HCT116 (cell line): ENCODE measurements at regions of chr4 and their contacts with region 1.

Region 1: DNA sequence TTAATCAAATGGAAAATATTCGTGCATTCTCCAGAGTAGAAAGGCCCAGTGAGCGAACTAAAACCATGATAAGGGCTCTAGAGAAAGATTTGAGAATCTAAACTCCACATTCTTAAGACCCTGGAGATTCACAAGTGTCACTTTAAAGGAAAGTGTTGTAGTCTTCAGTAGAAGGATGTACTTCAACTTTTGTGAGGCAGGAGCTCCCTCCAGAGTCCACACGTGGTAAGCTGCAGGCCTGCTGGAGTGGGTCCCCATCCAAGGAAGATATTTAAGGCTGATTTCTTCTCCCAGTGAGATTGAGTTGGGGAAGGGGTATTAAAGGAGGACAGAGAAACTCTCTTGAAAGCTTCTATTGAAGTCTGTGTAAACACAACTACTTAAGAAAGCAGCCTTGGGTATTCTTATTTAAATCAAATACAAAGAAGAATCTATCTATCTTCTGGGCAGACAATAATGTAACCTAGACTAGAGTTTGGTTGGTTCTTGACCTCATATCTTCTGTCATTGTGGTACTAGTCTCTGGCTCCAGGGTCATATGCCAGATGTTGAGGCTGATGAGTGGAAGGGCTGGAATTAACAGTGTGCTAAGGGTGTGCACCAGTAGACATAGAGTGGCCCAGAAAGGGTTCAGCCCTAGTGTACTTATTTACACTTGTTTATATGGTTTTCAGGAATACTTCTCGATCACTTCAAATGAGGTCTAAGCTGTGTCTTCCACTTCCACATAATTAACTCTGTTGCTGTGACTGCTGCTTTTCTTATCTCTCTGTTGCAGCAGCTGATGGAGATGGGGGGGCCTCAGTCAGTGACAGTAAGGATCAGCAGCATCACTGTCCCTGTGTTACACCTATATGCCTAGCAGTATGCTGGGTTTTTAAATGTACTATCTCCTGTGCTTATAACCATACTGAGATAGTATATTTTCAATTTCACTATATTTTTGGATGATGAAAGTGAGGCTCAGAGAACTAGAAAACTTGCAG is 76.1 kb downstream of the HMGB2 start:
- DNase-seq: peak; percentile 63
- ATAC-seq: peak; percentile 92
- H3K4me3 ChIP-seq: no peak overlapping the region
- H3K27ac ChIP-seq: no peak overlapping the region
- H3K4me1 ChIP-seq: peaks cover 6 to 9% of the 10 kb centered on the region in 2 experiments
- H3K27me3 ChIP-seq: no peaks in the 10 kb centered on the region
- CTCF ChIP-seq: peak; percentile 80 to 97 (median 87)
- POLR2A ChIP-seq: no peak
- RAD21 ChIP-seq: peak; percentile 94

Region 2: GRCh38 chr4:172842779-172843178 is 415.2 kb before region 1 on chr4:
- CTCF ChIA-PET with region 1: no interaction called
- POLR2A ChIA-PET with region 1: no interaction called
- RAD21 ChIA-PET with region 1: no interaction called
- intact Hi-C with region 1: no loop called
- DNase-seq: no peak
- ATAC-seq: no peak
- H3K4me3 ChIP-seq: no peak overlapping the region
- H3K27ac ChIP-seq: no peak overlapping the region
- H3K4me1 ChIP-seq: no peaks in the 10 kb centered on the region
- H3K27me3 ChIP-seq: no peaks in the 10 kb centered on the region
- CTCF ChIP-seq: no peak
- POLR2A ChIP-seq: no peak
- RAD21 ChIP-seq: no peak

Region 3: GRCh38 chr4:172892300-172892699 is 365.7 kb before region 1 on chr4:
- CTCF ChIA-PET with region 1: interaction called, 4 read pairs
- POLR2A ChIA-PET with region 1: no interaction called
- RAD21 ChIA-PET with region 1: no interaction called
- intact Hi-C with region 1: loop called (anchors 2 kb)
- DNase-seq: peak; percentile 18
- ATAC-seq: peak; percentile 63
- H3K4me3 ChIP-seq: no peak overlapping the region
- H3K27ac ChIP-seq: no peak overlapping the region
- H3K4me1 ChIP-seq: no peaks in the 10 kb centered on the region
- H3K27me3 ChIP-seq: no peaks in the 10 kb centered on the region
- CTCF ChIP-seq: peak; percentile 29 to 80 (median 77); a peak in 4 of 6 replicates
- POLR2A ChIP-seq: no peak
- RAD21 ChIP-seq: peak; percentile 58

Region 4: DNA sequence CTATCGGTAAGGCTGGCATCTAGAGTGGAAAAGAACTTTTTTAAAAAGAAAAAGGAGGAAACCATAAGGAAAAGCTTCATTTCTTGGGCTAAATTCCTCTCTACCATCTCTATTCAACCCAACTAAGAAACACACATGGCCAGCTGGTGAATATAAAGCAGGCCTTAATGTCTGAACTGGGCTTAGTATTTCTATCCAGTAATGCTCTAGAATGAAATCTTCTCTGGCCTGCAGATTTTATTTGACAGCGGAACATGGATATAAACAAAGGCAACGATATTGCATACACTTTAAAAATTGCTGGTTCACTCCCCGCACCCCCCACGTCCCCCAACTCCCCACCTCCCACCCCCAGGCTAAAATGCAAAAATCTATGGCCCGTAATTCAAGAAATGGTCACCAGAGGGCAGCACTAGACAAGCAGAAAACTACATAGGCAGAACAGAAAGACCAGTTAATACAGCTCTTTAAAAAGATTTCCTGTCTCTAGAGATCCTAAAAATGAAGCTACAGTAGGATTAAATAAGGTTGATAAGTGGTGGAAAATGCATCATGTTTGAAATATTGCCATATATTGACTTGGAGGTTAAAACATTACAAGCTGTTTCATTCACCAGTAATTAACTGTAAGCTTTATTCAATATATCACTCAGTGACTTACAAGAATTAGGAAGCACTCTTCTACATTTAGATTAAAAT is 244.6 kb before region 1 on chr4:
- CTCF ChIA-PET with region 1: interaction called, 88 read pairs
- POLR2A ChIA-PET with region 1: interaction called, 3 read pairs
- RAD21 ChIA-PET with region 1: interaction called, 9 to 13 read pairs
- intact Hi-C with region 1: loop called (anchors 1 kb)
- DNase-seq: no peak
- ATAC-seq: peak; percentile 61
- H3K4me3 ChIP-seq: no peak overlapping the region
- H3K27ac ChIP-seq: no peak overlapping the region
- H3K4me1 ChIP-seq: peaks cover 0 to 9% of the 10 kb centered on the region in 2 experiments; a peak in 2 of 4 replicates
- H3K27me3 ChIP-seq: no peaks in the 10 kb centered on the region
- CTCF ChIP-seq: peak; percentile 50 to 71 (median 69)
- POLR2A ChIP-seq: no peak
- RAD21 ChIP-seq: peak; percentile 81

Region 5: DNA sequence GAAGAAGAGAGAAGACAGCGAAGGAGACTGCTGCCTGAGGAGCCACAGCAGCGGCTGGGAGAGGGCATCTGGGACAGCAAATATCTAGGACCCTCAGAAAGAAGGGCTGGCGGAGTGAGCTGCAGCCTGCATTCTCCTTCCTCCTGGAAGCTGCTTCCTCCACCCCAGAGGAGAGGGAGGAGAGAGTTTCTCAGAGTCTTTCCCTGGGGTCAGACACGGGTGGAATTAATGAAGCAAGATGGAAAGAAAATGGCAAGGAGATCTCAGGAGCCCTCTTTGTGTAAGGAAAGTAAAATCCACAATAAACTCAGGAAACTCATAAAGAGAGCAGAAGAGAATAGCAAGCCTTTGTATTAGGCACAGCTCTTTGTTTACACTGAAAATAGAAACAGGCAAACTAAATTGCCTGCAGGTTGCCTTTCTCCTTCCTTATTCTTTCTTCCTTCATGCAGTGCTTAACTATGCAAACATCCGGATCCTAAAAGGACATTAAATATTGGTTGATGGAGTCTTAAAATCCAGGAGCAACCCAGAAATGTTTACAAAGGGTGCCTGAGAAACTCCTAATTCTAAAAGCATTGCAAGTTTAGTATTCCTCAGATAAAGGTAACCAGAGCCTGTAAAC is 219.6 kb before region 1 on chr4:
- CTCF ChIA-PET with region 1: interaction called, 10 read pairs
- POLR2A ChIA-PET with region 1: no interaction called
- RAD21 ChIA-PET with region 1: no interaction called
- intact Hi-C with region 1: no loop called
- DNase-seq: no peak
- ATAC-seq: no peak
- H3K4me3 ChIP-seq: no peak overlapping the region
- H3K27ac ChIP-seq: no peak overlapping the region
- H3K4me1 ChIP-seq: no peaks in the 10 kb centered on the region
- H3K27me3 ChIP-seq: no peaks in the 10 kb centered on the region
- CTCF ChIP-seq: no peak
- POLR2A ChIP-seq: no peak
- RAD21 ChIP-seq: no peak

Region 6: DNA sequence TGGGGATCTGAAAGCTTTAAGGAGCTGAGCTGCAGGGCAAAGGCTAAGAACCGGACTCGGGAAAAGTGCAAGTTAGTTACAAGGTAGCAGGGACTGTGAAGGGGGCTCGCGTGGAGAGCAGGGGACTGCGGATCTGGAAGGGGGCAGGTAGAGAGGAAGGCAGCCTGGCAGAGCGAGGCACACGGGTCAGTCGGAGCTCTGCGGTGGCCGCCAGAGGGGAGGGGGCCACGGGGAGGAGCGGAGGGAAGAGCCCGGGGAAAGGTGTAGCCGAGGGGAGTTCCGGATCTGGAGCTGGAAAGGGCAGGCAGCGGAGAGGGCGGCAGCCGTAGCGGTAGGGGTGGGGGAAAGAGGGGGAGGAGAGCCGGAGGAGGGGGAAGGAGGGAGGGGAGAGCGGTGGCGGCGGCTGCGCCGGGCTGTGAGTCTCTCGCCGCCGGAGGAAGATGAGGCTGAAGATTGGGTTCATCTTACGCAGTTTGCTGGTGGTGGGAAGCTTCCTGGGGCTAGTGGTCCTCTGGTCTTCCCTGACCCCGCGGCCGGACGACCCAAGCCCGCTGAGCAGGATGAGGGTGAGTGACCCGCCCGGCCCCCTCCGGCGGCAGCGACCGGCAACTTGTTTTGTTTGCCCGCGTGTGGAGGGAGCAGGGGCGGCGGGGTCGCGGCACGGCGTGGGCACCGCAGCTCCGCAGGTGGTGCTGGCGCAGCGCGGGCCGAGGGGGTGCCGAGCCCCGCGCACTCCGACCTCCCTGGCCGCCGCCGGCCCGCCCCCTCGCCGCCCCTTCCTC is 89.4 kb before region 1 on chr4 and contains the start of gene GALNT7:
- CTCF ChIA-PET with region 1: interaction called, 3 read pairs
- POLR2A ChIA-PET with region 1: interaction called, 3 read pairs
- RAD21 ChIA-PET with region 1: no interaction called
- intact Hi-C with region 1: loop called (anchors 1 kb)
- DNase-seq: no peak
- ATAC-seq: peak; percentile 74
- H3K4me3 ChIP-seq: peak within 1 kb of the TSS; percentile 68 to 80
- H3K27ac ChIP-seq: peak within 1 kb of the TSS; percentile 98
- H3K4me1 ChIP-seq: peaks cover 17 to 36% of the 10 kb centered on the region in 2 experiments; a peak in 3 of 4 replicates
- H3K27me3 ChIP-seq: no peaks in the 10 kb centered on the region
- CTCF ChIP-seq: no peak
- POLR2A ChIP-seq: peak; percentile 55
- RAD21 ChIP-seq: no peak
- total RNA-seq, gene GALNT7: 21.3 TPM

Region 7: DNA sequence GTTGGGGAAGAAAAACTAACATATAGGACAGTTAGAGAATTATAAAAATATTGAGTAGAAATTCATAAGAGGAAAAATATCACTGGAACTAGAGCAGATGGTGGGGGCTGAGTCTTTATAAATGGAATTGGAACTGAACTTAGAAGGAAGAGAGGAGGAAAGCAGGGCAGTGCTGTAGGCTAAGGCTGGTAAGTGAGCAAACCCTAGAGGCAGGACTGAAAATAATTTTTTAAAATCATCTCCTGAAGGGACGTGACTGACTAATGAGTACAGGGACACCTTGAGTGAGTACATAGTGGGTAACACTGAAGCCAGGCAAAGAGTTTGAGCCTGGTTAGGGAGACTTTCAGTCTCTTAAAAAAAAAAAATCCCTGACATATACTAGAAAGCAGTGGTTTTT is 26.1 kb before region 1 on chr4:
- CTCF ChIA-PET with region 1: no interaction called
- POLR2A ChIA-PET with region 1: no interaction called
- RAD21 ChIA-PET with region 1: no interaction called
- intact Hi-C with region 1: no loop called
- DNase-seq: no peak
- ATAC-seq: peak; percentile 95
- H3K4me3 ChIP-seq: no peak overlapping the region
- H3K27ac ChIP-seq: no peak overlapping the region
- H3K4me1 ChIP-seq: no peaks in the 10 kb centered on the region; a peak in 1 of 4 replicates
- H3K27me3 ChIP-seq: no peaks in the 10 kb centered on the region
- CTCF ChIP-seq: peak; percentile 33 to 45 (median 35); a peak in 4 of 6 replicates
- POLR2A ChIP-seq: no peak
- RAD21 ChIP-seq: peak; percentile 64

Region 8: DNA sequence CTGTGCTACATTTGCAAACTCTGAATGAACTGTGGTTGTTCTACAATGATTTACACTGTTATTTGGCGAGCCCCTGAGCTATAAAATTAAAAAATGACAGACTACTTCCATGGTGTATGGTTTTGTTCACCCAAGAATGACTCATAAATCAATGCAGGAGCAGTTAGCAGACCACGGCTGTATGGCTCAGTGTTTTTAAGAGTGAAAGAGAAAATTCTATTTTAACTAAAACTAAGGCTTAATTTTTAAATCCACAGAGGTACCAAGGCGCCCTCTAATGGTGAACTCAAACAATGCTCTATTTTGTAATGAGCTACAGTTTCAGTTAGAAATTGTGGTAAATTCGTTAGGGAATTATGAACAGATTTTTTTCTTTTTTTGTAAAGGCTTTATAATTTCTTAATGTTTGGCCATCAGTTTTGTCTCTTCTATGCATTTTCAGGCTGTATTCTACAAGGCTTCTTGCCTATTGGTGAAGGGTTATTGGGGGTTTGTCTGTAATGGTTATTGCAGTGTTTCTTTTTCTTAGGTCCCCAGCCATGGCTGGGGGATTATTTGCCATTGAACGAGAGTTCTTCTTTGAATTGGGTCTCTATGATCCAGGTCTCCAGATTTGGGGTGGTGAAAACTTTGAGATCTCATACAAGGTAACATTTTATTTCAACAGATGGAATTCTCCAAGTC is 43.6 kb after region 1 on chr4:
- CTCF ChIA-PET with region 1: interaction called, 13 read pairs
- POLR2A ChIA-PET with region 1: no interaction called
- RAD21 ChIA-PET with region 1: no interaction called
- intact Hi-C with region 1: no loop called
- DNase-seq: peak; percentile 3
- ATAC-seq: no peak
- H3K4me3 ChIP-seq: no peak overlapping the region
- H3K27ac ChIP-seq: no peak overlapping the region
- H3K4me1 ChIP-seq: no peaks in the 10 kb centered on the region
- H3K27me3 ChIP-seq: no peaks in the 10 kb centered on the region
- CTCF ChIP-seq: peak; percentile 56 to 89 (median 66); a peak in 5 of 6 replicates
- POLR2A ChIP-seq: no peak
- RAD21 ChIP-seq: peak; percentile 68